ENCODE measurements at regions of chr18 and their contacts with region 1.

Region 1: DNA sequence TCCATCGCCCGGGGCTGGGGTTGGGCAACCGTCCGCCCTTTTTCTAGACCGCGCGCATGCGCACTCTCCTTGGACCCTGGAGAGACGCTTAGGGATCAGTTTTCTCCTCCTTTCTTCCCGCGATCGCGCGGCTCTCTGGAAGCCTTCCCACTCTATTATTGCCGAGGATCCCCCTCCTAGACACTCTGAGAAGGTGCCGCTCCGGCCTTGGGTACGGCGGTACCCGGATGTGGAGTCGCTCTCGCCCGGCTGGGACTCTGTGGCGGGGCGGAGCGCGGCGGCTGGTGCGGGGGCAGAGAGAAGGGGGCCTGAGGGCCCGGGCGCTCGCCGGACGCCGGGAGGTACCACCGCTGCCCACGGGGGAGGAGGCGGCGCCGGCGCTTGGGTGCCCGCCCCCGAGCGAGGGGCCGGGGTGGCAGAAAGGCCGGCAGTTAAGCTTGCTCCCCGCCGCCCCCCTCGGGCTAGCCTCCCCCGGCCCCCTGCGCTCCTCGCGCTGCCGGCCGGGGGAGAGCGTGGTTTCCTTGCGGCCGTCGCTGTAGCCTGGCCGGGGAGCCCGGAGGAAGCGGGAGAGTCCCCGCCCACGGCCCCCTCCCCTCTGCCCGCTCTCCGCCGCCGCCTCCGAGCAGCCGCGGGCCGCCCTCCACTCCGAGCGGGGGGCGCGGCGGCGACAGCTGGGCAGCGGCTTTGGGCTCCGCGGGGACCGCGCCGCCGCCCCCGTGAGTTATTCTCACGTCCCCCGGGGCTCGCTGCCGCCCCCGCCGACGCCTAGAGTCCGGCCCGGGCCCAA is at the start of gene MIB1:
- DNase-seq: no peak
- ATAC-seq: peak; percentile 74
- H3K4me3 Mint-ChIP-seq: peak within 1 kb of the TSS; percentile 94
- H3K27ac Mint-ChIP-seq: peak within 1 kb of the TSS; percentile 95
- H3K4me1 Mint-ChIP-seq: peaks cover 34% of the 10 kb centered on the region
- H3K27me3 Mint-ChIP-seq: no peaks in the 10 kb centered on the region
- CTCF ChIP-seq: no peak
- total RNA-seq, gene MIB1: 34.6 to 37.4 TPM

Region 2: DNA sequence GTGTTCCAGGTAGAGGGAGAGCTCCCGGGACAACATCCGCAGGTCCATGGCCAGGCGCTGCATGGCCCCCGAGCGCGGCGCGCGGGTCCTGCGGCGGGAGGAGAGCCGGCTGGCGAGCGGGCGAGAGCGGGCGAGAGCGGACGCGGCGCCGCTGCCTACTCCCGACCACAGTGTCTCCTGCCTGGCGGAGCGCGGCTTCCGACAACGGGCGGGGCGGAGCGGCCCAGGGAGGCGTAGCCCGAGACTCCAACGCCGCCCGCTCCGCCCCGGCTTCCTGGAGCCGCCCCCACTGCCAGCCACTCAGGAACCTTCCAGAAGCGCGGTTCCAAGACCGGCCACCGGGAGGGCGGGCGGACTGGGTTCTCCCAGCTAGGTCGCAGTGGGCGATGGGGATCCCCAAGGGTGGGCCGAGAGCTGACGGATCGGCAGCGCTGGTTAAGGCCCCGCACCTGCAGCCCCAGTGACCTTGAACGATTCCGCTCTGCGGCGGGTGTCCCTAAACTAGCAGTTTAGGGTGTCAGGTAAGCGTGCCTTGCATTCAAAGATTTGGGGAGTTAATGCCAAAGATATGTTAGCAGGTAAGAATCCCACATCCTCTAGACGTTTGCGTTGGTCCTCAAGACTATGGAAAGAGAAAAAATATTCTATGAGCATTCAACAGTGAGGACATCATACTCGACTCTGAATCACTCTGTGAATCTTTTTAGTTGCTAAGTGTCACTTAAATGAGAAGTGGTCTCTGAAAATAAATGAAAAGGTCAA is 36.1 kb before region 1 on chr18 and contains the start of gene ABHD3:
- CTCF ChIA-PET with region 1: interaction called, 3 read pairs
- POLR2A ChIA-PET with region 1: interaction called, 6 read pairs
- intact Hi-C with region 1: loop called (anchors 5 kb)
- DNase-seq: peak; percentile 94
- ATAC-seq: peak; percentile 95
- H3K4me3 Mint-ChIP-seq: peak within 1 kb of the TSS; percentile 94
- H3K27ac Mint-ChIP-seq: peak within 1 kb of the TSS; percentile 92
- H3K4me1 Mint-ChIP-seq: peaks cover 31% of the 10 kb centered on the region
- H3K27me3 Mint-ChIP-seq: no peaks in the 10 kb centered on the region
- CTCF ChIP-seq: peak; percentile 22
- total RNA-seq, gene ABHD3: 17.8 to 18.0 TPM